ENCODE measurements at regions of chr22 and their contacts with region 1.

Region 1: GRCh38 chr22:28594797-28595462 is 84.7 kb downstream of the TTC28 start:
- DNase-seq: no peak
- H3K4me3 ChIP-seq: no peak overlapping the region
- H3K27ac ChIP-seq: no peak overlapping the region
- H3K4me1 ChIP-seq: peaks cover 0 to 4% of the 10 kb centered on the region in 2 donors
- H3K27me3 ChIP-seq: no peaks in the 10 kb centered on the region
- CTCF ChIP-seq: peak; percentile 38 to 91 (median 67)
- POLR2A ChIP-seq: no peak

Region 2: GRCh38 chr22:28019881-28020871 is 574.8 kb before region 1 on chr22:
- intact Hi-C with region 1: loop called (anchors 10 kb)
- DNase-seq: peak; percentile 64 to 66
- H3K4me3 ChIP-seq: no peak overlapping the region
- H3K27ac ChIP-seq: peak overlapping the region in 1 of 3 donors; percentile 5
- H3K4me1 ChIP-seq: peaks cover 9 to 37% of the 10 kb centered on the region in 2 donors
- H3K27me3 ChIP-seq: no peaks in the 10 kb centered on the region
- CTCF ChIP-seq: peak; percentile 79 to 97 (median 82)
- POLR2A ChIP-seq: no peak

Region 3: DNA sequence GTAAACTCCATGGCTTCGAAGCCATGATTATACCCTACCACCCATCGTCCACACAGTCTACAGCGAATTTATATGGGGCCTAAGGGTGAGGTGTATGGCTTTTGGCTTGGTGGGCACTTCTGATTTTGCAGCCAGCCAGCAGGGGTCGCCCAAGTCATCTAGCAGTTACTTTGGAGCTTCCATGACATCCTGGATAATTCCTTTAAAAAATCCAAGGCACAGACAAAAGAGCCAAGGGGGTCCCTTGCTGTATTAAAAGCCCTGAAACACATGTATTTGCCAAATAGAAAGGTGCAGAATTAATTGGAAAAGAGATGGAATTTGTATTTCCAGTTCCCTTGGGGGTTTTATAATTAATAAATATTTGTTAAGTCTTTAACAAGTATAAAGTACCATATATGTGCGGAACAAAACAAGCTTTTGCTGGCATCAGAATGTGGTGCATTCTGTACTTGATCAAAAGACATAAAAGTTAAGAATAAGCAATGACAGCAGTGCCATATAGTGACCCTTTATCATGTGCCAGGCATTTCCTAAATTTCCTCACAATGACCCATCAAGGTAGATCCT is 543.1 kb before region 1 on chr22:
- intact Hi-C with region 1: loop called (anchors 5 kb)
- DNase-seq: peak; percentile 69 to 72
- H3K4me3 ChIP-seq: no peak overlapping the region
- H3K27ac ChIP-seq: no peak overlapping the region
- H3K4me1 ChIP-seq: peaks cover 5 to 14% of the 10 kb centered on the region in 2 donors
- H3K27me3 ChIP-seq: no peaks in the 10 kb centered on the region
- CTCF ChIP-seq: peak; percentile 72 to 89 (median 78)
- POLR2A ChIP-seq: no peak

Measured in thyroid gland (tissue), 4 donors.